KBM-7 (cell line): ENCODE measurements at regions of chr12 and their contacts with region 1.

Region 1: GRCh38 chr12:109775172-109775881 is 57.9 kb downstream of the TRPV4 start:
- DNase-seq: peak; percentile 70

Region 2: DNA sequence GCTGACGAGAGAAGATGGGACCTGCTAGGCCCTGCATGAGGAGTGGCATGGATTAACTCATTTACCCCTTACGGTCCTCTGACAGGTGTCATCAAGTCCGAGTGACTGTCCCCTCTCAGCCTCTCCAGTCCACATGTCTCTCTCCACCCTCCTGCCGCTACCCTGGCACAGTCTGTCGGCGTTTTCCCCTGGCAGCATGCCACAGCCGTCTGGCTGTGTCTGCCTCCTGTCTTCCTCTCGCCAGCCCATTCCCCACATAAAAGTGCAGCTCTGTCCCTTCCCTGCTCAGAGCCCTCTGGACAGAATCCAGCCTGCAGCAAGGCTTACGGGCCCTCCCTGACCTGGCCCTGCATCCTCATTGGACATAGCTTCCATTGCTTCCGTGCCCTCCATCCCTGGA is 252.3 kb before region 1 on chr12:
- in situ Hi-C with region 1: loop called (anchors 10 kb)
- DNase-seq: no peak

Region 3: DNA sequence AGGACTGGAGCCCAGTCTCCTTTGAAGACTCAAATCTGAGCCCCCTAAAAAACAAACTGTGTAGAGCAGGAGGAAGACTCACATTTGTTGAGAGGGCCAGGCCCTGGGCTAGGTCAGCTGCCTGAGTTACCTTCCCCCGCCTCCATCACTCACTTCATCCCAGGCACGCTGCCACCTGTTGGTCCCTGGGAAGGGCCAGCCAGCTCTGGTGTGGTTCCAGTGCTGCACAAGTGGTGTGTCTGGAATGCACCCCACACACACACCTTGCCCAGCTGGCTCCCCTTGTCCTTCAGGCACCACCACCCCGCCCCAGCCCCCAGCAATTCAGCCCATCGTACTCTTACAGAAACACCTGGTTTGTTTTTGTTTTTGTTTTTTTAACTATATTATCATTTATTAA is 192.7 kb before region 1 on chr12:
- in situ Hi-C with region 1: no loop called
- DNase-seq: no peak